GM13976 (cell line): ENCODE measurements at regions of chr6 and their contacts with region 1.

Region 1: GRCh38 chr6:127539272-127539671 is 20.1 kb upstream of the MTCL3 start:
- DNase-seq: peak; percentile 40
- CTCF ChIP-seq: peak; percentile 7

Region 2: DNA sequence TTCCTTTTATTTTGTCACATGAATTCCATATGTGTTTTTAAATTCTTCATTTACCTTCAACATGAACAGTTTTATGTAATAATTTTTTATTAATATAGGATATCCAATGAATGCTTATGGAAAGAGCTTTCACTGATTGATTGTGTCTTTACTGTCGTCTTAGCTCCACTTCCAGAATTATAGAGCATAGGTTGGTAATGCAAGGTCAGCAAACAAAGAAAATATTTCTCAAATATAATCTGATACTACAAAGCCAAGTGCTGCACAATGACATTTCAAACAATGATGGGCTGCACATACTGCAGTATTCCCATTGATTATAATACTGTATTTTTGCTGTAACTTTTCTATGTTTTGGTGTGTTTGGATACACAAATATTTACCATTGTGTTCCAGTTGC is 696.5 kb before region 1 on chr6:
- in situ Hi-C with region 1: no loop called
- DNase-seq: no peak
- CTCF ChIP-seq: no peak

Region 3: GRCh38 chr6:127302728-127303660 is 236.3 kb before region 1 on chr6:
- in situ Hi-C with region 1: loop called (anchors 25 kb)
- DNase-seq: peak; percentile 28
- CTCF ChIP-seq: peak; percentile 33

Region 4: GRCh38 chr6:127464881-127465459 is 74.3 kb before region 1 on chr6:
- in situ Hi-C with region 1: loop called (anchors 5 kb)
- DNase-seq: peak; percentile 66
- CTCF ChIP-seq: peak; percentile 83

Region 5: GRCh38 chr6:127807806-127808517 is 268.7 kb after region 1 on chr6:
- in situ Hi-C with region 1: no loop called
- DNase-seq: no peak
- CTCF ChIP-seq: no peak